ENCODE measurements at regions of chr1 and their contacts with region 1.

Region 1: DNA sequence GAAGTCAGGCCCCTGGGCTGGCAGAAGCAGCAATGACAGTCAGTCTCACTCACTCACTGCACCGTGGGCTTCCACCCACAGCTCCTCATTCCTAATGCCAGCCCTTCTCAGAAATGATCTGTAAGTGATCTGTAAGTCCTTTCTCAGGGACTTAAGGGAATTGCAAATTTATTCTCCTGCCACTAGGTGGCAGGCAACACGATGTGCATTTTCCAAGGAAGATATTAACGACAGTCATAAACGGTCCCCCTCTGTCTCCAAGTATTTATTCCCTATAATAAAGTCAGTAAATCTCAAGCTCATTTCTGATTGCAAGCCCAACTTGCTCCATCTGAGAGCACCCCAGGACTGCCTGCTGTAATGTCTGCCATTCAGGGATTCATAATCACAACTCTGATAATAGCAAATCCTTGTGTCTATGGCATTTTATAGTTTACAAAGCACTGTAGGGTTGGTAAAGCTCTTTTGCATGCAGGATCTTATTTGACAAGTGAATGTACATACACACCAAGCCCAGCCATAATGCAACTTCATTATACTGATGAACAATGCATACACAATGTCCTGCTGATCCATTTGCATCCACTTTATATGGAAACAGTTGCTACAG is 380.6 kb upstream of the CAMK1G start:
- DNase-seq: peak in 3 of 9 donors; percentile 3 to 13 (median 10)
- ATAC-seq: no peak
- H3K4me3 ChIP-seq: no peak overlapping the region
- H3K4me3 Mint-ChIP-seq: no peak overlapping the region
- H3K27ac ChIP-seq: no peak overlapping the region
- H3K27ac Mint-ChIP-seq: no peak overlapping the region
- H3K4me1 ChIP-seq: no peaks in the 10 kb centered on the region
- H3K4me1 Mint-ChIP-seq: peaks cover 0 to 7% (median 4%) of the 10 kb centered on the region in 7 donors
- H3K27me3 ChIP-seq: no peaks in the 10 kb centered on the region
- H3K27me3 Mint-ChIP-seq: peaks cover 24 to 53% (median 38%) of the 10 kb centered on the region in 5 donors

Region 2: DNA sequence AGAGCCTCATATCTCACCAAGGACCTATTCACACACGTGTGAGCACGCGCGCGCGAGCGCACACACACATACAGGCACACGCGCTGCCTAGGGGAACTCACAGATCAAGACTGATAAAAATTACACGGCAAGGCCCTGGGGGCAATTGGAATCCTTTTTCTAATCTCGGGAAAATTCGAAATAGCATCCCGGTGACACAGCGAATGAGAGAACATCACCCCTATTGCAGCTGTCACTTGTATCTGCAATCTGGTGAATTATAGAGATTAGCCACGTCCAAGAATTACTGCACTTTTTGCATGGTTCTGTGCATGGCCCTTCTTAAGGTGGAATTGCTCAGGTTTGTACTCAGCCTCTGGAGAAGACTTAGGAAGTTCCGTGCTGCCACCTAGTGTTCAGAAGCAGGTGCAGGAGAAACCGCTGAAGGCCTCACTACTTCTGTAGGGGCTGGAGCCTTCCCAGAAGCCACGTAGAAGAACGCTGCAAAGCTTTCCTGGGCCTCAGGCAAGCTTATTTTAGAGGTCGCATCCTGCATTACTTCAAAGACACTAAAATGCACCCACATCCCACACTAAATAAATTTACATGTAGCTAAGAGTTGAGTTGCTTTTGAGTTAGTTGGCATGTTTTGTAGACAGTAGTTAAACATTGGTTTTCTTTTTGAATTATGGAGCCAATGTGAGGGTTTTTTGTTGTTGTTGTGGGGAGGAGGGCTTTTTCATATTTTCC is 151.3 kb after region 1 on chr1:
- CTCF ChIA-PET with region 1: no interaction called
- POLR2A ChIA-PET with region 1: no interaction called
- intact Hi-C with region 1: loop called in 1 of 2 experiments (anchors 5 kb)
- DNase-seq: peak in 7 of 9 donors; percentile 7 to 31 (median 13)
- ATAC-seq: peak; percentile 70
- H3K4me3 ChIP-seq: no peak overlapping the region
- H3K4me3 Mint-ChIP-seq: no peak overlapping the region
- H3K27ac ChIP-seq: no peak overlapping the region
- H3K27ac Mint-ChIP-seq: no peak overlapping the region
- H3K4me1 ChIP-seq: no peaks in the 10 kb centered on the region
- H3K4me1 Mint-ChIP-seq: peaks cover 0 to 5% (median 2%) of the 10 kb centered on the region in 7 donors
- H3K27me3 ChIP-seq: no peaks in the 10 kb centered on the region
- H3K27me3 Mint-ChIP-seq: peaks cover 0 to 9% (median 5%) of the 10 kb centered on the region in 5 donors

Measured in naive thymus-derived CD4-positive, alpha-beta T cell (primary cell).